K562 (cell line): ENCODE measurements at regions of chr20 and their contacts with region 1.

Region 1: DNA sequence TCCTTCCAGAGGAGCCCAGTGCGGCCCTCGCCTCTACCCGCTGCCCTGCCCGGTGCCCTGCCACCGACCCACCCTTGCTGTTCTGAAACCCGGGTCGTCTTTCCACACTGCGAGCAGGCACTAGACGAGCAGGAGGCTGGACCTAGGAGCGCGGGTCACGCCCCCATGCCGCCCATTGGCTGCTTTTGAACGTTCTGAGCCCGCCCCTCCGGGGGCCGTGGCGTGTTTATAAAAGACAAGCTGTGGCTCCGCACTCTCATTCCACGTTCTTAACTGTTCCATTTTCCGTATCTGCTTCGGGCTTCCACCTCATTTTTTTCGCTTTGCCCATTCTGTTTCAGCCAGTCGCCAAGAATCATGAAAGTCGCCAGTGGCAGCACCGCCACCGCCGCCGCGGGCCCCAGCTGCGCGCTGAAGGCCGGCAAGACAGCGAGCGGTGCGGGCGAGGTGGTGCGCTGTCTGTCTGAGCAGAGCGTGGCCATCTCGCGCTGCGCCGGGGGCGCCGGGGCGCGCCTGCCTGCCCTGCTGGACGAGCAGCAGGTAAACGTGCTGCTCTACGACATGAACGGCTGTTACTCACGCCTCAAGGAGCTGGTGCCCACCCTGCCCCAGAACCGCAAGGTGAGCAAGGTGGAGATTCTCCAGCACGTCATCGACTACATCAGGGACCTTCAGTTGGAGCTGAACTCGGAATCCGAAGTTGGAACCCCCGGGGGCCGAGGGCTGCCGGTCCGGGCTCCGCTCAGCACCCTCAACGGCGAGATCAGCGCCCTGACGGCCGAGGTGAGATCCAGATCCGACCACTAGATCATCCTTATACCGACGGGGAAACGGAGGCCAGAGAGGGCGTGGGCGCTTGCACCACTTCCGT is at the start of gene ID1:
- DNase-seq: peak; percentile 91 to 98 (median 94)
- ATAC-seq: peak; percentile 81
- H3K4me3 ChIP-seq: peak within 1 kb of the TSS; percentile 94
- H3K27ac ChIP-seq: peak within 1 kb of the TSS; percentile 85
- H3K4me1 ChIP-seq: peaks cover 28 to 56% of the 10 kb centered on the region in 2 experiments; a peak in 4 of 5 replicates
- H3K27me3 ChIP-seq: no peaks in the 10 kb centered on the region
- CTCF ChIP-seq: no peak
- EP300 ChIP-seq: peak; percentile 18; the same call in 1 of the 2 replicates
- POLR2A ChIP-seq: peak; percentile 100
- RAD21 ChIP-seq: no peak
- polyA plus RNA-seq, gene ID1: 1.4 to 4.4 TPM

Region 2: DNA sequence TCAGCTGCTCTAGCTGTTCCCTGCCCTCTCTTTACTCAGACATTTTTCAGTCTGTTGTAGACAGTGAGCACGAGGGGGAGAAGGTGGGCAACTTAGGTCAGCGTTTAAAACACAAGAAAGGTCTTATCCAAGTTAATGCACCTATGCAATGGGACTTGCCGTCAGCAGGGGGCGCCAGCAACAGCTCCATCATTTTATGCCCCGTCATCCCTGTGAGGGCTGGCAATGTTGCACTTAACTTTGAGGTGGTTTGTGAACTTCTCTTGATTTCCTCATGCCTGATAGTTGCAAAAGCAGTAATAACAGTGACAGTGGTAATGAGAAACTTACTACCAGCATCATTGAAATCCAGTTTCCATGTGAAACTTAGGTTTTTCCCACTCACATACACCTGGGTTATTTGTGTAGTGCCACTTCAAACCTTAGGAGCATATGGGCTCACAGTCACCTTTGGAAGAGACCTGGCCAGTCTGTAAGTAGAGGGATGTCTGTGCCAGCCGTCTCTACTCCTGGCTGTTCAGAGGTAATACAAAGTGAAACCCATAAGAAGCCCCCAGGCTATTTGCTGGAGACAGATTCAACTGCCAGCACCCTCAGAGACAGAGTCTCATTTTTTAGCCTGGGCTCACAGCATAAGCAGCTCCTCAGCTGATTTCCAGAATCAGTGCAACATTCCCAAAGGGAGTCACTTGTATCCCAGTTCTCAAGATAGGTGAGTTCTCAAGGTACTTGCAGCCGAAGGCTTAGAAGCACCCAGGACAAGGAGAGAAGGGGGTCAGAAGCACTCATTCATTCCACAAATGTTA is 45.0 kb before region 1 on chr20:
- CTCF ChIA-PET with region 1: interaction called, 304 read pairs
- POLR2A ChIA-PET with region 1: interaction called, 89 read pairs
- in situ Hi-C with region 1: loop called (anchors 5 kb)
- intact Hi-C with region 1: no loop called
- DNase-seq: peak; percentile 71 to 89 (median 76)
- ATAC-seq: peak; percentile 79
- H3K4me3 ChIP-seq: no peak overlapping the region
- H3K27ac ChIP-seq: peak overlapping the region; percentile 57
- H3K4me1 ChIP-seq: peaks cover 9 to 25% of the 10 kb centered on the region in 2 experiments; a peak in 4 of 5 replicates
- H3K27me3 ChIP-seq: no peaks in the 10 kb centered on the region
- CTCF ChIP-seq: peak; percentile 91 to 99 (median 95)
- EP300 ChIP-seq: peak; percentile 54
- POLR2A ChIP-seq: no peak
- RAD21 ChIP-seq: peak; percentile 64 to 76

Region 3: GRCh38 chr20:31572701-31573554 is 32.3 kb before region 1 on chr20:
- CTCF ChIA-PET with region 1: interaction called, 304 read pairs
- POLR2A ChIA-PET with region 1: interaction called, 107 read pairs
- in situ Hi-C with region 1: no loop called
- intact Hi-C with region 1: loop called (anchors 1 kb)
- DNase-seq: peak; percentile 93 to 99 (median 95)
- ATAC-seq: peak; percentile 87
- H3K4me3 ChIP-seq: peak overlapping the region; percentile 84
- H3K27ac ChIP-seq: peak overlapping the region; percentile 96
- H3K4me1 ChIP-seq: peaks cover 10 to 48% of the 10 kb centered on the region in 2 experiments; a peak in 4 of 5 replicates
- H3K27me3 ChIP-seq: no peaks in the 10 kb centered on the region
- CTCF ChIP-seq: peak in 2 of 3 experiments; percentile 0 to 9; a peak in 1 of 6 replicates
- EP300 ChIP-seq: peak; percentile 20
- POLR2A ChIP-seq: peak; percentile 83
- RAD21 ChIP-seq: peak; percentile 1 to 37; a peak in 1 of 4 replicates

Region 4: DNA sequence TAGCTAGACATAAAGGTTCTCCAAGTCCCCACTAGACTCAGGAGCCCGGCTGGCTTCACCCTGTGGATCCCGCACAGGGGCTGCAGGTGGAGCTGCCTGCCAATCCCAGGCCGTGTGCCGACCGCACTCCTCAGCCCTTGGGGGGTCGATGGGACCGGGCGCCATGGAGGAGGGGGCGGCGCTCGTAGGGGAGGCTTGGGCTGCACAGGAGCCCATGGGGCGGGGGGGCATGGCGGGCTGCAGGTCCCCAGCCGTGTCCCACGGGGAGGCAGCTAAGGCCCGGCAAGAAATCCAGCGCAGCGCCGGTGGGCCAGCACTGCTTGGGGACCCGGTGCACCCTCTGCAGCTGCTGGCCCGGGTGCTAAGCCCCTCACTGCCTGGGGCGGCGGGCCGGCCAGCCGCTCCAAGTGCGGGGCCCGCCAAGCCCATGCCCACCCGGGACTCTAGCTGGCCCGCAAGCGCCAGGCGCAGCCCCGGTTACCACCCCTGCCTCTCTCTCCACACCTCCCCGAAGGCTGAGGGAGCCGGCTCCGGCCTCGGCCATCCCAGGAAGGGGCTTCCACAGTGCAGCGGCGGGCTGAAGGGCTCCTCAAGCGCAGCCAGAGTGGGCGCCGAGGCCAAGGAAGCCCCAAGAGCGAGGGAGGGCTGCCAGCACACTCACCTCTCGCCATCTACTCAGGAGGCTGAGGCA is 26.7 kb before region 1 on chr20:
- CTCF ChIA-PET with region 1: interaction called, 3 read pairs
- POLR2A ChIA-PET with region 1: interaction called, 107 read pairs
- in situ Hi-C with region 1: no loop called
- intact Hi-C with region 1: loop called (anchors 1 kb)
- DNase-seq: no peak
- ATAC-seq: no peak
- H3K4me3 ChIP-seq: no peak overlapping the region
- H3K27ac ChIP-seq: no peak overlapping the region
- H3K4me1 ChIP-seq: peaks cover 2 to 18% of the 10 kb centered on the region in 2 experiments; a peak in 3 of 5 replicates
- H3K27me3 ChIP-seq: no peaks in the 10 kb centered on the region
- CTCF ChIP-seq: no peak
- EP300 ChIP-seq: no peak
- POLR2A ChIP-seq: no peak
- RAD21 ChIP-seq: no peak

Region 5: GRCh38 chr20:31587545-31588389 is 17.5 kb before region 1 on chr20:
- CTCF ChIA-PET with region 1: no interaction called
- POLR2A ChIA-PET with region 1: interaction called, 43 read pairs
- in situ Hi-C with region 1: no loop called
- intact Hi-C with region 1: no loop called
- DNase-seq: peak in 3 of 4 experiments; percentile 39 to 69 (median 64)
- ATAC-seq: peak; percentile 67
- H3K4me3 ChIP-seq: peak overlapping the region; percentile 27; the same call in 1 of the 2 replicates
- H3K27ac ChIP-seq: no peak overlapping the region
- H3K4me1 ChIP-seq: peaks cover 10 to 27% of the 10 kb centered on the region in 2 experiments
- H3K27me3 ChIP-seq: no peaks in the 10 kb centered on the region
- CTCF ChIP-seq: no peak
- EP300 ChIP-seq: no peak
- POLR2A ChIP-seq: no peak
- RAD21 ChIP-seq: no peak

Region 6: GRCh38 chr20:31630187-31630790 is 25.0 kb after region 1 on chr20:
- CTCF ChIA-PET with region 1: no interaction called
- POLR2A ChIA-PET with region 1: interaction called, 18 read pairs
- in situ Hi-C with region 1: no loop called
- intact Hi-C with region 1: no loop called
- DNase-seq: no peak
- ATAC-seq: no peak
- H3K4me3 ChIP-seq: no peak overlapping the region
- H3K27ac ChIP-seq: no peak overlapping the region
- H3K4me1 ChIP-seq: peaks cover 8 to 19% of the 10 kb centered on the region in 2 experiments; a peak in 4 of 5 replicates
- H3K27me3 ChIP-seq: no peaks in the 10 kb centered on the region; a peak in 1 of 5 replicates
- CTCF ChIP-seq: no peak
- EP300 ChIP-seq: no peak
- POLR2A ChIP-seq: no peak
- RAD21 ChIP-seq: no peak

Region 7: GRCh38 chr20:31738729-31739561 is 133.7 kb after region 1 on chr20 and contains the start of gene TPX2:
- CTCF ChIA-PET with region 1: no interaction called
- POLR2A ChIA-PET with region 1: interaction called, 17 read pairs
- in situ Hi-C with region 1: no loop called
- intact Hi-C with region 1: no loop called
- DNase-seq: peak; percentile 98 to 100 (median 100)
- ATAC-seq: peak; percentile 96
- H3K4me3 ChIP-seq: peak within 1 kb of the TSS; percentile 82
- H3K27ac ChIP-seq: peak within 1 kb of the TSS; percentile 95
- H3K4me1 ChIP-seq: peaks cover 5 to 11% of the 10 kb centered on the region in 2 experiments; a peak in 4 of 5 replicates
- H3K27me3 ChIP-seq: no peaks in the 10 kb centered on the region
- CTCF ChIP-seq: peak; percentile 30 to 80 (median 39); a peak in 5 of 6 replicates
- EP300 ChIP-seq: no peak
- POLR2A ChIP-seq: peak; percentile 92
- RAD21 ChIP-seq: peak in 1 of 2 experiments; percentile 9; a peak in 1 of 4 replicates
- polyA plus RNA-seq, gene TPX2: 48.0 to 57.8 TPM